CD4-positive, alpha-beta T cell (primary cell): ENCODE measurements at regions of chr1 and their contacts with region 1.

Region 1: DNA sequence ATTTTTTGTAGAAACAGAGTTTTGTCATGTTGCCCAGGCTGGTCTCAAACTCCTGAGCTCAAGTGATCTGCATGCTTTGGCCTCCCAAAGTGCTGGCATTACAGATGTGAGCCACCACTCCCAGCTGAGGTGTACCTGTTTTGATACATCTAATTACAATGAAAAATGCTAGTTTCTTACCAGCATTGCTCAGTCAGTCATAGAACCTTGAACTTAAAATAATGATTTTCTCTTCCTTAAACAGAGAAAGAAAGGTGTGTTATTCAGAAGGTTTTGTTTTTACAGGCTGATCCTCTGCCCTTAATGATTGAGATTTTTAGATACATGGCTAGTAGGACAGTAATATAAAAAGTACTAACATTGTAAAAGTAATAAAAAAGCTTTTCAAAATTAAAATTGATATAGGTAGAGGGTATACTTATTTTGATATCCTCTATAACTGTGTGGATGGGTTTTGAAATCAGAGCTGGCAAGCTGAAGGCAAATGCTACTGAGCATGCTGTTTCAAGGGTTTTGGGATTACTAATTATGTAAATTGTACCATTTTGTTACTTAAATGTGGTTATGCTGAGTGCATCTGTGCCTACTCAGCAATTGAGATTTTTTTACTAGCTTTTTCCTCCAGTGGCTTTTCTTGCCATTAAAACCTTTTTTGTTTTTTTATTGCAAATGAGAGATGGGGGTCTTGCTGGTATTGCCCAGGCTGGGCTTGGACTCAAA is 16.1 kb downstream of the PRRC2C start:
- DNase-seq: no peak
- ATAC-seq: no peak
- H3K4me3 ChIP-seq: no peak overlapping the region
- H3K4me3 Mint-ChIP-seq: peak overlapping the region; percentile 11
- H3K27ac ChIP-seq: no peak overlapping the region
- H3K27ac Mint-ChIP-seq: peak overlapping the region; percentile 1
- H3K4me1 ChIP-seq: peaks cover 54% of the 10 kb centered on the region
- H3K4me1 Mint-ChIP-seq: peaks cover 98% of the 10 kb centered on the region
- H3K27me3 ChIP-seq: no peaks in the 10 kb centered on the region
- H3K27me3 Mint-ChIP-seq: no peaks in the 10 kb centered on the region
- CTCF ChIP-seq: no peak

Region 2: DNA sequence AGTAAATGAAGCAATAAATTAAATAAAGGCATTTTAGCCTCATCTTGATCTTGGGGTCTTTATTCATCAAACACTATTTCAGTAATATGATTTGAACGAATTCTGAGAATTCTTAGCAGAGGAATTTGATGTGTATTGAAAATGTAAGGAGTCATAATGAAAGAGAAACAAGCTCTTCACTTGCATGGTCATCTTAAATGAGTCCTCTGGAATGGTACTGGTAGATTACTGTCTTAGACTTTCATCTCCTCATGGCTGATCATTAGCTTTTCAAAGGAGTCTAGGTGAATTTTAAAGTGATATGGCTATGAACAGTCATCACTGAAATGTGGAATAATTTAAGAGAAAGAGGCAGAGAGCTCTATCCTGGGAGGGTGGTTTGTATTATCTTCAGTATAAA is 13.8 kb after region 1 on chr1:
- CTCF ChIA-PET with region 1: no interaction called
- POLR2A ChIA-PET with region 1: no interaction called
- intact Hi-C with region 1: loop called in 1 of 2 experiments (anchors 2 kb)
- DNase-seq: no peak
- ATAC-seq: no peak
- H3K4me3 ChIP-seq: no peak overlapping the region
- H3K4me3 Mint-ChIP-seq: no peak overlapping the region
- H3K27ac ChIP-seq: no peak overlapping the region
- H3K27ac Mint-ChIP-seq: no peak overlapping the region
- H3K4me1 ChIP-seq: no peaks in the 10 kb centered on the region
- H3K4me1 Mint-ChIP-seq: peaks cover 46% of the 10 kb centered on the region
- H3K27me3 ChIP-seq: no peaks in the 10 kb centered on the region
- H3K27me3 Mint-ChIP-seq: no peaks in the 10 kb centered on the region
- CTCF ChIP-seq: no peak

Region 3: DNA sequence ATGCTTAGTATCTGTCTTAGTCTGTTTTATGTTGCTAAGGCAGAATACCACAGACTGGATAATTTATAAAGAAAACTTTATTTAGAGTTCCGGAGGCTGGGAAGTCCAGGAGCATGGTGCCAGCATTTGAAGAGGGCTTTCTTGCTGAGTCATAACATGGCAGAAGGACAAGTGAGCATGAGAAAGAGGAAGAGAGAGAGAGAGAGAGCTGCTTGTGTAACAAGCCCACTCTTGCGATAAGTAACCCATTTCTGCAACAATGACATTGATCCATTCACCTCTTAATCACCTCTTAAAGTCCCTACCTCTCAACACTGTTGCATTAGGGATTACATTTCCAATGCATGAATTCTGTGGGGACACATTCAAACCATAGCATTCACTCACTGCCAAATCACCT is 108.9 kb after region 1 on chr1:
- CTCF ChIA-PET with region 1: no interaction called
- POLR2A ChIA-PET with region 1: no interaction called
- intact Hi-C with region 1: no loop called
- DNase-seq: no peak
- ATAC-seq: no peak
- H3K4me3 ChIP-seq: no peak overlapping the region
- H3K4me3 Mint-ChIP-seq: no peak overlapping the region
- H3K27ac ChIP-seq: no peak overlapping the region
- H3K27ac Mint-ChIP-seq: no peak overlapping the region
- H3K4me1 ChIP-seq: no peaks in the 10 kb centered on the region
- H3K4me1 Mint-ChIP-seq: no peaks in the 10 kb centered on the region
- H3K27me3 ChIP-seq: no peaks in the 10 kb centered on the region
- H3K27me3 Mint-ChIP-seq: no peaks in the 10 kb centered on the region
- CTCF ChIP-seq: no peak